Activated T-helper 2 cell treated with anti-CD3 and anti-CD28 coated beads, Interferon-gamma antibody, Interleukin-2, Interleukin-4, amounts not matched to agents 10 μg/mL and 5 μg/mL and 100 μg/mL, durations not matched to agents 14 hours and 24 hours and 36 hours (primary cell): ENCODE measurements at regions of chr17 and their contacts with region 1.

Region 1: GRCh38 chr17:56833809-56834379 is at the starts of genes C17orf67 and DGKE:
- DNase-seq: peak; percentile 97
- H3K4me3 Mint-ChIP-seq: peak within 1 kb of the TSS; percentile 94
- H3K27ac Mint-ChIP-seq: peak within 1 kb of the TSS; percentile 93
- H3K4me1 Mint-ChIP-seq: peaks cover 43% of the 10 kb centered on the region
- H3K27me3 Mint-ChIP-seq: no peaks in the 10 kb centered on the region
- total RNA-seq, gene C17orf67: 3.7 and 4.2 TPM in 2 replicates
- total RNA-seq, gene DGKE: 26.5 and 28.9 TPM in 2 replicates

Region 2: DNA sequence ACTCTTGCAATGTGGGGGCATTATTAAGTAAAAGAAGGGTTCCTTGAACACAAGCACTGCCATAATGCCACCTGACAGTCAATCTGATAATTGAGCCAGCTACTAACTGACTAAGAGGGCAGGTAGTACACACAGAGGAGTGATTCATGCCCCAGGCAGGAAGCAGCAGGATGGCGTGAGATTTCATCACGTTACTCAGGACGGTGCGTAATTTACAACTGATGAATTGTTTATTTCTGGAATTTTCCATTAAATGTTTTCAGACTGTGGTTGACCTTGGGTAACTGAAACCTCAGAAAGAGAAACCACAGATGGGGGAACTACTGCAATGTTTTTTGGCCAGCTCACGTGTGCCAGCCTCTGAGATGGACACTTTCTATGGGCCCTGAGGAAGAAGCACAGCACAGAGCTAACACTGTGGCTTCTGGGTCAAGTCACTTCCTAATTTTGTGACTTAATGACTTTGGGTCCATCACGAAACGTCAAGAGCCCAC is 46.9 kb before region 1 on chr17:
- intact Hi-C with region 1: loop called (anchors 5 kb)
- DNase-seq: peak; percentile 54
- H3K4me3 Mint-ChIP-seq: peak overlapping the region; percentile 43
- H3K27ac Mint-ChIP-seq: peak overlapping the region; percentile 88
- H3K4me1 Mint-ChIP-seq: peaks cover 36% of the 10 kb centered on the region
- H3K27me3 Mint-ChIP-seq: no peaks in the 10 kb centered on the region

Region 3: GRCh38 chr17:56880133-56880532 is 46.2 kb after region 1 on chr17:
- intact Hi-C with region 1: no loop called
- DNase-seq: no peak
- H3K4me3 Mint-ChIP-seq: no peak overlapping the region
- H3K27ac Mint-ChIP-seq: no peak overlapping the region
- H3K4me1 Mint-ChIP-seq: peaks cover 2% of the 10 kb centered on the region
- H3K27me3 Mint-ChIP-seq: no peaks in the 10 kb centered on the region

Region 4: DNA sequence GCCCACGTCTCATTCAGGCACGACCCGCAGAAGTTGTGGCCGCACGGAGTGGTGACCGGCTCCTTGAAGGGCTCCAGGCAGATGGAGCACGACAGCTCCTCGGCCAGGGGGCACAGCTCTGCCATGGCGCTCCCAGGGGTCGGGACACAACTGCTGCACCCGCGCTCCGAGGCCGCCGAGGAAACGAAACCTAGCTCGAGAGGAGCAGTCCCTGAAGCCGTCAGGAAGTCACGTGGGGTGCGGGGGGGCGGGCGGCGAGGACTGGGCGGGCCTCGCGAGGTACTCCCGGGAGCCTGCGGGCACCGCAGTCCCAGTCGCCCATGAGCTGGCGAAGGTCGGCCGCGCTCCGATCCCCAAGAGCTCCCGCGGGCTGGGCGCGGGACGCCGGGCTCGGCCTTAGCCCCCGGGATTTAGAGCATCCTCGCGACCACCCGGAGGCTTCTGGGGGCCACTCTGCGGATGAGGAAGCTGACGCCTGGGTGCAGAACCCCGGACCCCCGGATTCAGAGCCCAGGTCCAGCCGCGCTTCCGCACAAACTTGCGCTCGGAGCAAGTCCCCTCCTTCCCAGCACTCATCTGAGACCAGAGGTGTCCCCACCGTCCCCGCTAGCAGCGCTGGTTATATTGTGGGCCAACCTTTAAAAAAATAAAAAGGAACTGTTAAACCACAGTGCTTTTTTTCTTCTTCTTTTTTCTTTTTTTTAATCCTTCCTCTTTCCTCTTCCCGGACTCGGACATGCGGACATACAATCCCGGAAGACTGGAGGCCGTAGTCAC is 80.2 kb after region 1 on chr17 and contains the start of gene TRIM25:
- intact Hi-C with region 1: loop called (anchors 1 kb)
- DNase-seq: peak; percentile 77
- H3K4me3 Mint-ChIP-seq: peak within 1 kb of the TSS; percentile 92
- H3K27ac Mint-ChIP-seq: peak within 1 kb of the TSS; percentile 96
- H3K4me1 Mint-ChIP-seq: peaks cover 59% of the 10 kb centered on the region
- H3K27me3 Mint-ChIP-seq: no peaks in the 10 kb centered on the region
- total RNA-seq, gene TRIM25: 76.5 and 85.9 TPM in 2 replicates

Region 5: DNA sequence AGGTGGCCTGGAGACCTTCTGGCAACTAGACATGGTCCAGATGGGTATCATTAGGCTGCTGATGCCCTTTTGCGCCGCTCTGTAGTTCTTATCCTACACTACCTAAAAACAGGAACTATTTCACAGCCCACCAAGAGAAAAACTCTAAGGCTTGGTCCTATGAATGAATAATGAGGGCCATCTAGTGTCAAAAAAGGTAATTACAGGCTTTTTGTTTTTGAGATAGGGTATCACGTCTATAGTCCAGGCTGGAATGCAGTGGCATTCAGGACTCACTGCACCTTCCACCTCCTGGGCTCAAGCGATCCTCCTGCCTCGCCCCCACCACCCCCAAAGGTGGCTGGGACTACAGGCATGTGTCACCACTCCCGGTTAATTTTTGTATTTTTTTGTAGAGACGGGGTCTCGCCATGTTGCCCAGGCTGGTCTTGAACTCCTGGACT is 106.0 kb after region 1 on chr17:
- intact Hi-C with region 1: loop called (anchors 1 kb)
- DNase-seq: no peak
- H3K4me3 Mint-ChIP-seq: no peak overlapping the region
- H3K27ac Mint-ChIP-seq: peak overlapping the region; percentile 65
- H3K4me1 Mint-ChIP-seq: peaks cover 25% of the 10 kb centered on the region
- H3K27me3 Mint-ChIP-seq: no peaks in the 10 kb centered on the region

Region 6: GRCh38 chr17:56960596-56961538 is 127.0 kb after region 1 on chr17 and contains the start of gene COIL:
- intact Hi-C with region 1: loop called (anchors 5 kb)
- DNase-seq: peak; percentile 89
- H3K4me3 Mint-ChIP-seq: peak within 1 kb of the TSS; percentile 81
- H3K27ac Mint-ChIP-seq: peak within 1 kb of the TSS; percentile 80
- H3K4me1 Mint-ChIP-seq: peaks cover 16% of the 10 kb centered on the region
- H3K27me3 Mint-ChIP-seq: peaks cover 2% of the 10 kb centered on the region
- total RNA-seq, gene COIL: 20.3 and 23.1 TPM in 2 replicates

Region 7: DNA sequence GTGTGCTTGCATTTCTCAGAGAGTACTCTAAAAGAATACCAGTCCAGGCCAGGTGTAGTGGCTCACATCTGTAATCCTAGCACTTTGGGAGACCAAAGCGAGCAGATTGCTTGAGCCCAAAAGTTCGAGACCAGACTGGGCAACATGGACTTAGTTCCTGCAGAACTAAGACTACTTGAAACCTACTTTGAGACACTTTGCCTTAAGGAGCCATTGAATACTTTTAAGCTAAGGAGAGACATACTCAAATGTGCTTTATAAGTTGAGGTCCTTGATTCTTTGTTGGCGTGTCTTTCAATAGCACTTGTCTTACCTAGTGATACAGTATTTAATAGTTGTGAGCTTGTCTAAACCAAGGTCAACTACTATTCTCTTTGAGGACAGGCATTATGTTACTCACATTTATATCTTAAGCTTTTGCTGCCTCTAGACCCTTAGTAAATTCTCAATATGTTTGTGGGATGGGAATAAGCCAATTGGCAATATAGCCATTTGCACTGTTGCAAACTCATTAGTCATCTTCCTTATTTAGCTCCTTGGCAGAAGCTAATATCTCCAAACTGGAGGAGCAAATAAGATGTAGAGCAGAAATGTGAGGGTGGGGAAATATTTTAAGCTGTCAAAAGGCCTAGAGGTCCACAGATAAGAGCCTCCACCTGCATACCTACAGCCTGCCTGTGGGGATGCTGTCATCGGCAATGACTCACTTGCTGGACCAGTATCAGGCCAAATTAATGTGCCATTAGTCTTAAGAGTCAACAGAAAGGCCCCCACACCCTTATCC is 160.3 kb after region 1 on chr17:
- intact Hi-C with region 1: no loop called
- DNase-seq: no peak
- H3K4me3 Mint-ChIP-seq: no peak overlapping the region
- H3K27ac Mint-ChIP-seq: no peak overlapping the region
- H3K4me1 Mint-ChIP-seq: no peaks in the 10 kb centered on the region
- H3K27me3 Mint-ChIP-seq: no peaks in the 10 kb centered on the region

Region 8: GRCh38 chr17:57084802-57085447 is 251.0 kb after region 1 on chr17 and contains the start of gene AKAP1:
- intact Hi-C with region 1: loop called (anchors 2 kb)
- DNase-seq: peak; percentile 95
- H3K4me3 Mint-ChIP-seq: peak within 1 kb of the TSS; percentile 86
- H3K27ac Mint-ChIP-seq: peak within 1 kb of the TSS; percentile 87
- H3K4me1 Mint-ChIP-seq: peaks cover 41% of the 10 kb centered on the region
- H3K27me3 Mint-ChIP-seq: peaks cover 11% of the 10 kb centered on the region
- total RNA-seq, gene AKAP1: 38.7 and 45.0 TPM in 2 replicates